ENCODE measurements at regions of chr7 and their contacts with region 1.

Region 1: GRCh38 chr7:74479961-74480829 is 26.5 kb downstream of the GTF2IRD1 start:
- DNase-seq: peak; percentile 93 to 96
- ATAC-seq: peak; percentile 28 to 29
- H3K4me3 ChIP-seq: peak overlapping the region; percentile 41 to 54 (median 49)
- H3K27ac ChIP-seq: peak overlapping the region; percentile 93 to 100 (median 100)
- H3K4me1 ChIP-seq: peaks cover 80 to 83% of the 10 kb centered on the region in 2 donors
- H3K27me3 ChIP-seq: no peaks in the 10 kb centered on the region
- CTCF ChIP-seq: no peak
- POLR2A ChIP-seq: peak in 1 of 2 donors; percentile 92

Region 2: GRCh38 chr7:74429153-74429747 is 50.9 kb before region 1 on chr7:
- in situ Hi-C with region 1: no loop called
- intact Hi-C with region 1: loop called (anchors 1 kb)
- DNase-seq: no peak
- ATAC-seq: peak; percentile 34 to 60
- H3K4me3 ChIP-seq: no peak overlapping the region
- H3K27ac ChIP-seq: peak overlapping the region in 2 of 4 donors; percentile 85 to 88
- H3K4me1 ChIP-seq: peaks cover 3 to 25% of the 10 kb centered on the region in 2 donors
- H3K27me3 ChIP-seq: no peaks in the 10 kb centered on the region
- CTCF ChIP-seq: no peak
- POLR2A ChIP-seq: peak in 1 of 2 donors; percentile 10

Region 3: GRCh38 chr7:74449809-74450397 is 30.3 kb before region 1 on chr7:
- in situ Hi-C with region 1: loop called in 1 of 4 experiments (anchors 5 kb)
- intact Hi-C with region 1: no loop called
- DNase-seq: peak in 1 of 2 donors; percentile 11
- ATAC-seq: peak in 1 of 2 donors; percentile 32
- H3K4me3 ChIP-seq: no peak overlapping the region
- H3K27ac ChIP-seq: peak overlapping the region in 1 of 4 donors; percentile 21
- H3K4me1 ChIP-seq: peaks cover 0 to 9% of the 10 kb centered on the region in 2 donors
- H3K27me3 ChIP-seq: no peaks in the 10 kb centered on the region
- CTCF ChIP-seq: peak; percentile 56 to 88 (median 83)
- POLR2A ChIP-seq: no peak

Region 4: DNA sequence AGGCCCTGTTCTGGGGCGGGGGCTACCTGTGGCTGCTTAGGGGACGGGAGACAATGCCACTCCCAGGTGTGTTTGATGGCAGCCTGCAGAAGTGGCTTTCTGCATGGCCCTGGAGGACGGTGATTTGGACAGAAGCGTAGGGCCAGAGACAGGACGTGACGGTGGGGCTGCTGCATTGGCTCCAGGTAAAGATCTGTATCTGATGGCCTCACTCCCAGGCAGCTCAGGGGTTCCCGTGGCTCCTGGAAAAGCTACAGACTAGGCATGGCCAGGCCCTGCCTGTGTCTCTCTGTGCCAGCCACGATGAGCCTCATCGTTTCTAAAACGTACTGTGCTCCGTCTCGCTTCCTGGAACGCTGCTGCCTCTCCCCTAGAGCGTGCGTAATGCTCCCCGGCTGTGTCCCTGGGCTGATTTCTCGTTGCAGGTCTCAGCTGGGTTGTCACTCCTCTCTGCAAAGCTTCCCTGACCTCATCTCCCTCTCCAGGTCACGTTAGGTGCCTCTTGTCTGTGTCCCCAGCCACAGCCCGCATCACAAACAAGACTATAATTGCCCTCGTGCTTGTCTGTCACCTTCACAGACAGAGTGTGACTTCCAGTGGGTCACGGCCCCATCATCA is 13.9 kb before region 1 on chr7:
- in situ Hi-C with region 1: no loop called
- intact Hi-C with region 1: loop called (anchors 1 kb)
- DNase-seq: peak; percentile 90 to 94
- ATAC-seq: peak; percentile 64 to 76
- H3K4me3 ChIP-seq: peak overlapping the region in 2 of 4 donors; percentile 33 to 44
- H3K27ac ChIP-seq: peak overlapping the region; percentile 93 to 100 (median 100)
- H3K4me1 ChIP-seq: peaks cover 52 to 70% of the 10 kb centered on the region in 2 donors
- H3K27me3 ChIP-seq: no peaks in the 10 kb centered on the region
- CTCF ChIP-seq: no peak
- POLR2A ChIP-seq: peak; percentile 75 to 86

Region 5: GRCh38 chr7:74502181-74502891 is 22.1 kb after region 1 on chr7:
- in situ Hi-C with region 1: no loop called
- intact Hi-C with region 1: loop called (anchors 1 kb)
- DNase-seq: peak; percentile 93 to 97
- ATAC-seq: peak; percentile 76 to 81
- H3K4me3 ChIP-seq: no peak overlapping the region
- H3K27ac ChIP-seq: peak overlapping the region; percentile 87 to 94 (median 90)
- H3K4me1 ChIP-seq: peaks cover 14 to 37% of the 10 kb centered on the region in 2 donors
- H3K27me3 ChIP-seq: no peaks in the 10 kb centered on the region
- CTCF ChIP-seq: peak in 2 of 5 experiments; percentile 7 to 23
- POLR2A ChIP-seq: peak; percentile 26 to 46

Region 6: GRCh38 chr7:74656837-74657691 is 176.9 kb after region 1 on chr7:
- in situ Hi-C with region 1: no loop called
- intact Hi-C with region 1: loop called (anchors 5 kb)
- DNase-seq: peak; percentile 97 to 98
- ATAC-seq: peak; percentile 70 to 72
- H3K4me3 ChIP-seq: peak overlapping the region; percentile 66 to 100 (median 86)
- H3K27ac ChIP-seq: peak overlapping the region; percentile 97 to 100 (median 99)
- H3K4me1 ChIP-seq: peaks cover 41 to 43% of the 10 kb centered on the region in 2 donors
- H3K27me3 ChIP-seq: no peaks in the 10 kb centered on the region
- CTCF ChIP-seq: peak in 1 of 5 experiments; percentile 13
- POLR2A ChIP-seq: peak; percentile 46 to 64

Region 7: GRCh38 chr7:75966190-75966961 is 1486.2 kb after region 1 on chr7:
- in situ Hi-C with region 1: no loop called
- intact Hi-C with region 1: loop called (anchors 10 kb)
- DNase-seq: peak; percentile 91 to 92
- ATAC-seq: peak; percentile 72 to 75
- H3K4me3 ChIP-seq: peak overlapping the region; percentile 38 to 61 (median 52)
- H3K27ac ChIP-seq: peak overlapping the region; percentile 91 to 97 (median 94)
- H3K4me1 ChIP-seq: peaks cover 76 to 86% of the 10 kb centered on the region in 2 donors
- H3K27me3 ChIP-seq: no peaks in the 10 kb centered on the region
- CTCF ChIP-seq: no peak
- POLR2A ChIP-seq: peak; percentile 51 to 76

Measured in gastrocnemius medialis (tissue), 4 donors.